Activated CD8-positive, alpha-beta T cell treated with anti-CD3 and anti-CD28 coated beads, Interleukin-2, amount 10 ng/mL, durations not matched to agents 7 days and 5 days (primary cell): ENCODE measurements at regions of chr1 and their contacts with region 1.

Region 1: GRCh38 chr1:89274411-89274857 is 1.8 kb upstream of the GBP5 start:
- DNase-seq: no peak
- ATAC-seq: peak; percentile 36
- H3K4me3 Mint-ChIP-seq: peak overlapping the region; percentile 80
- H3K27ac Mint-ChIP-seq: peak overlapping the region; percentile 96
- H3K4me1 Mint-ChIP-seq: peaks cover 59% of the 10 kb centered on the region
- H3K27me3 Mint-ChIP-seq: no peaks in the 10 kb centered on the region

Region 2: DNA sequence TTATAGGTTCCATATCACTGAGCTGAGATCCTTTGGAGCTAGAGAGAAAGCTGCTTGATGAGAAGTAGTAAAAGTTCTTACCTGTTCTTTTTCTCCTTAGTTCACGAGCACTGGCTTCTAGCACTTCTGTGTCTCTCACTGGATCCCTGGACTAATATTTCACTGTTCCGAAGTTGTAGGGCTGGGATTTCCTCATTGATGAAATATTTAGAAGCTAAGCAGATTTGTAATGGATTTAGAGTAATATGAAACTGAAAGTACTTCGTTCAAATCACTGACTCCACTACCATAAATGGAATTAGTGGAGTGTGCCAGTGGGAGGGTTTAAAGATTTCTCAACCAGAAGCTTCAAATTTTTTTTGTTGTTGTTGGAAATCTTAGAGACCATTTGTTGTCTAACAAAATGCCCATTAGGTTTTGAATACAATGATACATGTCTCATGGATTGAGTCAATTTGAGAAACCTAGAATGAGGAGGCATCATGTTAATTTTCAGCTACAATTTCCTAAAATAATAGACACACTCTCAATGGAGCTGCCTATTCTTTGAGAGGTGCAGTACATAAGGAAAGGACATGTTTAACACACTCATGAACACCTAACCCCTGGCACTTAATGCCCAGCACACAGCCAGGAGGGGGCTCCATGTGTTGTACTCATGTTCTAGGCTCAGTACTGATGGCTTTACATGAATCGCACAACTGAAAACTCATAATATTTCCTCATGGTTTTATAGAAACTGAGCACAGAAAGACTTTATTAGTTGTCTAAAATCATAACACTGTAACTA is 209.2 kb before region 1 on chr1 and contains the start of gene GBP1:
- CTCF ChIA-PET with region 1: no interaction called
- POLR2A ChIA-PET with region 1: interaction called, 10 read pairs
- DNase-seq: peak; percentile 43
- ATAC-seq: peak; percentile 82
- H3K4me3 Mint-ChIP-seq: peak within 1 kb of the TSS; percentile 90
- H3K27ac Mint-ChIP-seq: peak within 1 kb of the TSS; percentile 90
- H3K4me1 Mint-ChIP-seq: peaks cover 55% of the 10 kb centered on the region
- H3K27me3 Mint-ChIP-seq: no peaks in the 10 kb centered on the region
- total RNA-seq, gene GBP1: 146 to 147 TPM

Region 3: DNA sequence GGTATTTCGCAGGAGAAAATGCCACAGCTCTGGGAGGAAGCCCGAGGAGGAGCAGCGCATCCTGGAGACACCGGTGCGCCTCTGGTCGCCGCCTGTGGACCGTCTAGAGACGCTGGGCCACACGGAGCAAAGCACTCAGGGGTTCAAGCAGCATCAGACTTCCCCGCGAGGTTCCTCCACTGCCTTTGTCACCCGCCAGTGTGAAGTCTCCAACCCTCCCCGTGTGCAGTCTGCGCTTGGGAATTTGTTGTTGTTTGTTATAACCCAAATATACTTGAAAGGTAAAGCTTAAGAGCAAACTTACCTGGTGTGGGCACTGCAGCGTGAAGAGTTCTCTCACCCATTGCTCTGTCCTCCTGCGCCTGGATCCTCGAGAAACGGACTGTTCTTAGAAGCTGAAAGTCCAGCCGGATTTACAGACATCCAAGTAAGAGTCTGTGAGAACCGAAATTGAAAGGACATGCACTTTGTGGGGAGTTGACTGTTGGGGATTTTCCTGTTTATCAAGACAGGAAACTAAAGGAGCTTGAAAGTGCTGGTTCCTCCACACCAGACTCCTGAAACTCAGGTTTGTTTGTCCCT is 75.9 kb before region 1 on chr1 and contains the start of gene GBP4:
- CTCF ChIA-PET with region 1: interaction called, 36 read pairs
- POLR2A ChIA-PET with region 1: interaction called, 68 read pairs
- DNase-seq: peak; percentile 66
- ATAC-seq: peak; percentile 81
- H3K4me3 Mint-ChIP-seq: peak within 1 kb of the TSS; percentile 86
- H3K27ac Mint-ChIP-seq: peak within 1 kb of the TSS; percentile 91
- H3K4me1 Mint-ChIP-seq: peaks cover 62% of the 10 kb centered on the region
- H3K27me3 Mint-ChIP-seq: no peaks in the 10 kb centered on the region
- total RNA-seq, gene GBP4: 51.0 to 60.7 TPM

Region 4: DNA sequence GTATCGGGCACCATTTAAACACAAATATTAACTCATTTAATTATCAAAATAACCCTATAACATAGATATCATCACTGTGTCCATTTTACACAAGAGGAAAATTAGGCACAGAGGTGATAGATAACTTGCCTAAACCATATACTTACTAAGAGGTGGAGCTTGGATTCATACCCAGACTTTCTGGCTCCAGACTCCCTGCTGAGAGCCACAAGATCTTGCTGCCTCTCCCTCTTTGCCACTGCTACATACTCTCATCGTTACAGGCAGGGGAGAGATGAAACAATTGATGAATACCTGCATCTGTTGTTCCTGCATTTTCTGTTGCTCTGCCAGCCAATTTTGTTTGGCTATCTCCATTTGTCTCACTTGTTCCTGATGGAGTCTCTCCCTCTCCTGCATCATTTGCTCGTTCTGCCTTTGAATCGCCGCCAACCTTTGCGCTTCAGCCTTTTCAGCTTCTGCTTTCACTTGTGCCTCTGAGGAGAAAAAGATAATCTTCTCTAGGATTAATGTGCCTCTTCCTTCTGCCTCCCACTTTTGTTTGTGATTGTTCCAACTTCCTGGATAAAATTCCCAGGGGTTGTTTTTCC is 12.4 kb before region 1 on chr1:
- CTCF ChIA-PET with region 1: interaction called, 30 read pairs
- POLR2A ChIA-PET with region 1: interaction called, 49 read pairs
- DNase-seq: no peak
- ATAC-seq: no peak
- H3K4me3 Mint-ChIP-seq: peak overlapping the region; percentile 65
- H3K27ac Mint-ChIP-seq: peak overlapping the region; percentile 40
- H3K4me1 Mint-ChIP-seq: peaks cover 79% of the 10 kb centered on the region
- H3K27me3 Mint-ChIP-seq: no peaks in the 10 kb centered on the region

Region 5: GRCh38 chr1:89286549-89287180 is 12.2 kb after region 1 on chr1:
- CTCF ChIA-PET with region 1: interaction called, 47 read pairs
- POLR2A ChIA-PET with region 1: interaction called, 156 read pairs
- DNase-seq: peak; percentile 50
- ATAC-seq: peak; percentile 84
- H3K4me3 Mint-ChIP-seq: peak overlapping the region; percentile 31
- H3K27ac Mint-ChIP-seq: peak overlapping the region; percentile 88
- H3K4me1 Mint-ChIP-seq: peaks cover 82% of the 10 kb centered on the region
- H3K27me3 Mint-ChIP-seq: no peaks in the 10 kb centered on the region

Region 6: DNA sequence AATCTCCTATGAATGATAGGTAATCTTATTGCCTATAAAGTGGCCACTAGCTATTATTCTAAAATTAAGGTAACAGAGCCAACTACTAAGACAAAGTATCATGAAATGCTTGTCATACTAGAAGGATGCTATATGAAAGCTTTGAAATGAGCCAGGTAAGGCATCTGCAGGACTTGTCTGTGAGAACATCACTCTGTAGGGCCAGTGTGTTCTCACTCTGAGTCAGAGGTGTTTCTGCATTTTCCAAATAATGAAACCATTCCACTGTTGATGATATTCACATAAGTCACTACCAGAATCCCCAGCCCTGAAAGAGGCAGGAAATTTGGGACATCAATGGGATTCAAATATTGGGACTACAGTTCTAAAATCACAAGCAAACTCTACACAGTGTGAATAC is 24.0 kb after region 1 on chr1:
- CTCF ChIA-PET with region 1: interaction called, 7 read pairs
- POLR2A ChIA-PET with region 1: interaction called, 20 read pairs
- DNase-seq: no peak
- ATAC-seq: no peak
- H3K4me3 Mint-ChIP-seq: no peak overlapping the region
- H3K27ac Mint-ChIP-seq: no peak overlapping the region
- H3K4me1 Mint-ChIP-seq: peaks cover 61% of the 10 kb centered on the region
- H3K27me3 Mint-ChIP-seq: no peaks in the 10 kb centered on the region

Region 7: GRCh38 chr1:89310505-89310904 is 36.1 kb after region 1 on chr1:
- CTCF ChIA-PET with region 1: interaction called, 10 read pairs
- POLR2A ChIA-PET with region 1: interaction called, 85 read pairs
- DNase-seq: no peak
- ATAC-seq: peak; percentile 78
- H3K4me3 Mint-ChIP-seq: peak overlapping the region; percentile 60
- H3K27ac Mint-ChIP-seq: peak overlapping the region; percentile 93
- H3K4me1 Mint-ChIP-seq: peaks cover 57% of the 10 kb centered on the region
- H3K27me3 Mint-ChIP-seq: no peaks in the 10 kb centered on the region